ENCODE measurements at regions of chr7 and their contacts with region 1.

Region 1: GRCh38 chr7:82234457-82235049 is 209.0 kb downstream of the CACNA2D1 start:
- DNase-seq: no peak
- H3K4me3 Mint-ChIP-seq: no peak overlapping the region
- H3K27ac Mint-ChIP-seq: no peak overlapping the region
- H3K4me1 Mint-ChIP-seq: no peaks in the 10 kb centered on the region
- H3K27me3 Mint-ChIP-seq: no peaks in the 10 kb centered on the region

Region 2: DNA sequence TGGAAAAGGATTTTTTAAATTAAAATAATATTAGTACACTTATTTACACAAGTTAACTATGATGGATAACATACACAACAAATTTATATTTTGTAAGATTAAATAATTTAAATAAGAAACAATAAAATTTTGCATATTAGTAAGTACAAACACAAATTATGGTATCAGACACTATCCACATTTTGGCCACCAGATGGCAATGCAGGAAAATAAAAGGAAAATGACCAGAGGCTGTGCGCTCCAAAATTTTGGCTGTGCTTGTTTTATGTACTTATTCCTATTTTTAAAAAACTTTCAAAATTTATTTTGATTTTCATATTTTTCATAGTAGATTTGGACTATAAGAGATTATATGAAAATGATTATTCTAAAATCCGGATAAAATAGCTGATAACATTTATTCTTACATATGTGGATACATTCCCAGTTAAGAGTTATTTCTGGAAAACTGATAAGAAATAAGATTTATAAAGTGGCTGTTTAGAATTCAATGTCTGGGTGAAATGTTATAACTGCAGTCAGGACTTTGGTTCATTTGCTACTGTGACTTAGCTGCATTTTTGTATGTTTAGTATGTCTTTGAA is 190.0 kb before region 1 on chr7:
- CTCF ChIA-PET with region 1: no interaction called
- intact Hi-C with region 1: loop called (anchors 10 kb)
- DNase-seq: peak; percentile 46
- H3K4me3 Mint-ChIP-seq: no peak overlapping the region
- H3K27ac Mint-ChIP-seq: no peak overlapping the region
- H3K4me1 Mint-ChIP-seq: no peaks in the 10 kb centered on the region
- H3K27me3 Mint-ChIP-seq: no peaks in the 10 kb centered on the region

Region 3: DNA sequence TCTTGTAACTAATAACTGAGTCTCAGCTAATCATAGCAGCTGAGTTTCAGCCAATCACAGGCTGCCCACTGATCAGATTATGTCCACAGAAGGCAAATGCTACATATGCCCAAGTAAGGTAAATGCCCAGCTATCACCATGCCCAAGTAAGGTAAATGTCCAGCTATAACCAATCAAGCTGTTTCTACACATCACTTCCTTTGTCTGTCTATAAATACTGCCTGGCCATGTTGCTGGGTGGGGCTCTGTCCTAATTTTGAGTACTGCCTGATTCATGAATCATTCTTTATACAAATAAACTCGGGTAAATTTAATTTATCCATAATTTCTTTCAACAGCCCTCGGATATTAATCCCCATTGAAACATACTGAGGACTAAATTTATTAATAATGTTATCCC is 103.3 kb before region 1 on chr7:
- CTCF ChIA-PET with region 1: no interaction called
- intact Hi-C with region 1: no loop called
- DNase-seq: no peak
- H3K4me3 Mint-ChIP-seq: no peak overlapping the region
- H3K27ac Mint-ChIP-seq: no peak overlapping the region
- H3K4me1 Mint-ChIP-seq: no peaks in the 10 kb centered on the region
- H3K27me3 Mint-ChIP-seq: no peaks in the 10 kb centered on the region

Region 4: GRCh38 chr7:82481499-82482097 is 247.0 kb after region 1 on chr7:
- CTCF ChIA-PET with region 1: no interaction called
- intact Hi-C with region 1: loop called (anchors 1 kb)
- DNase-seq: no peak
- H3K4me3 Mint-ChIP-seq: no peak overlapping the region
- H3K27ac Mint-ChIP-seq: no peak overlapping the region
- H3K4me1 Mint-ChIP-seq: no peaks in the 10 kb centered on the region
- H3K27me3 Mint-ChIP-seq: peaks cover under 1% of the 10 kb centered on the region

Region 5: DNA sequence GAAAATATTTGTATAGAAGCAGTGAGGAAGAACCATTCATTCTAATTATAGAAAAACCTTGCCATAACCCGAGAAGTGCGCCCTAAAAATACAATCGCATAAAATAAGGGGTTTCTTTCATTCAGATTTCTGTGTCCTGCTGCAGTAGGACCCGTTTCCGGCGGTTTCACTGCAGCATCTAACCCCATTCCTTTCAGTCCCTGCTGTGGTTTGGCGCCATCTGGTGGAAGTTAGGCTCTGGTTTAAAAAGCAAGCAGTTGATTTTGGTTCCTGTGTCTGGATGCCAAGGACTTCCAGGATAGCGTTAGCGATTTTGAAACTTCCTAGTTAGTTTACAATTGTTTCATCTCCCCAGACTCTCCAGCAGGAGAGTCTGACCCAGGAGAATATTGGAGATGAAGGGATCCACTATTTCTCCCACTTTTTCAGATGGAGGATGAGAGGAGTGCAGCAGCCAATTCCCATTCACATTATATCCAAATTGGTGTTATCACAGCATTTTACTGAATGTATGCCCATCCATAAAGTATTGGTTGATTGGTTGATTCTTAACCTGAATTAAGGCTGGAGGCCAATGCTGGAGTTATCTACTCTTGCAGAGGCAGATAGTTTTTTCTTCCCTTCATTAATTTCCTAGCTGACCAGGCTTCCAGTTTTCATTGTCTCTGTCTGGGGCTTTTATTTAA is 337.8 kb after region 1 on chr7:
- CTCF ChIA-PET with region 1: interaction called, 6 read pairs
- intact Hi-C with region 1: loop called (anchors 1 kb)
- DNase-seq: peak; percentile 84
- H3K4me3 Mint-ChIP-seq: no peak overlapping the region
- H3K27ac Mint-ChIP-seq: no peak overlapping the region
- H3K4me1 Mint-ChIP-seq: no peaks in the 10 kb centered on the region
- H3K27me3 Mint-ChIP-seq: no peaks in the 10 kb centered on the region

Region 6: GRCh38 chr7:82605247-82605872 is 370.8 kb after region 1 on chr7:
- CTCF ChIA-PET with region 1: no interaction called
- intact Hi-C with region 1: loop called (anchors 5 kb)
- DNase-seq: peak; percentile 20
- H3K4me3 Mint-ChIP-seq: no peak overlapping the region
- H3K27ac Mint-ChIP-seq: no peak overlapping the region
- H3K4me1 Mint-ChIP-seq: no peaks in the 10 kb centered on the region
- H3K27me3 Mint-ChIP-seq: no peaks in the 10 kb centered on the region

Region 7: DNA sequence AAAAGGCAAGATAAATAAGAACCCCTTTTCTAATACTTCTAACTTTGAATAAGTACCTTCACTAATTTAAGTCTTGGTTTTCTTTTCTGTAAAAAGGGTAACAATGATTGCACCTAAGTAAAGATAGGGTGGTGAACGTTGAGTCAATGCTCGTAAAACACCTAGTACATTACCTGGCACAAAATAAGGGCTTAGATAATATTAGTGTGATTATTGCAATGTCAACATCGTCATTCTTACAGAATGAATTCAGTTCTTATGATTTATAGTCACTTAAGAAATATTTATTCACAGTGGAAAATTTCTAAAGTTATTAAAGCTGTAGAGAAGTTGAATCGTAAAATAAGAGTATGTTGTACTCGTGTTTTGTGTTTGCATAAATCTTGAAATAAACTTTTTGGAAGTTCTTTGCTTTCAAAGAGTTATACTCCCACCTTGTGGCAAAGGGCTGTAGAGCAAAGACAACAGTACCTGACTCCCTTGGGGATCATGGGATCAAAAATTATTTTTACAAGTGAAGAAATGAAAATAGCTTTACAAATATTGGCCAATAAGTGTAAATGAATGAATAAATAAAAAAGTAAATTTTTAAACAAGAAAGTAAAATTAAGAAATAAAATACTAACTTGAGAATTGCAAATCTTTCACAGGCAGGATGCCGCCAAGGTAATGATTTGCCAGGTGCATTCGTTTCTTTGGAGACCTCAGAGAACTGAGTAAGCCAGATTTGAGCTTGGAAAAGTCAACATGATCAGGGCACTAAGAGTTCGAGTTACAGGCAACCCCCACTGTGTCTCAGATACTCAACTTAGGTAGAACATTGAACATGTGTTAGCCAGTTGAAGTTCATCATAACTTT is 494.8 kb after region 1 on chr7:
- CTCF ChIA-PET with region 1: no interaction called
- intact Hi-C with region 1: loop called (anchors 1 kb)
- DNase-seq: no peak
- H3K4me3 Mint-ChIP-seq: no peak overlapping the region
- H3K27ac Mint-ChIP-seq: no peak overlapping the region
- H3K4me1 Mint-ChIP-seq: no peaks in the 10 kb centered on the region
- H3K27me3 Mint-ChIP-seq: no peaks in the 10 kb centered on the region